HepG2 (cell line): ENCODE measurements at regions of chr9 and their contacts with region 1.

Region 1: GRCh38 chr9:124257844-124258606 is at the start of gene NEK6:
- DNase-seq: no peak
- ATAC-seq: no peak
- H3K4me3 ChIP-seq: peak within 1 kb of the TSS; percentile 77 to 99 (median 98)
- H3K27ac ChIP-seq: peak within 1 kb of the TSS; percentile 95
- H3K4me1 ChIP-seq: peaks cover 50% of the 10 kb centered on the region
- H3K27me3 ChIP-seq: peaks cover 0 to 12% of the 10 kb centered on the region in 2 experiments; a peak in 3 of 5 replicates
- CTCF ChIP-seq: no peak
- EP300 ChIP-seq: no peak
- POLR2A ChIP-seq: peak in 1 of 2 experiments; percentile 14; a peak in 1 of 4 replicates
- RAD21 ChIP-seq: no peak; the same call in 1 of the 2 replicates
- total RNA-seq, gene NEK6: 30.4 and 44.7 TPM in 2 replicates

Region 2: GRCh38 chr9:124079176-124079925 is 178.7 kb before region 1 on chr9:
- CTCF ChIA-PET with region 1: no interaction called
- POLR2A ChIA-PET with region 1: no interaction called
- in situ Hi-C with region 1: no loop called
- intact Hi-C with region 1: no loop called
- DNase-seq: peak; percentile 21
- ATAC-seq: peak; percentile 15; the same call in 2 of the 3 replicates
- H3K4me3 ChIP-seq: no peak overlapping the region
- H3K27ac ChIP-seq: no peak overlapping the region
- H3K4me1 ChIP-seq: peaks cover 27% of the 10 kb centered on the region
- H3K27me3 ChIP-seq: no peaks in the 10 kb centered on the region; a peak in 2 of 5 replicates
- CTCF ChIP-seq: no peak
- EP300 ChIP-seq: no peak
- POLR2A ChIP-seq: no peak
- RAD21 ChIP-seq: no peak

Region 3: GRCh38 chr9:124202447-124202971 is 55.5 kb before region 1 on chr9:
- CTCF ChIA-PET with region 1: no interaction called
- POLR2A ChIA-PET with region 1: no interaction called
- in situ Hi-C with region 1: no loop called
- intact Hi-C with region 1: no loop called
- DNase-seq: no peak
- ATAC-seq: peak; percentile 59; the same call in 2 of the 3 replicates
- H3K4me3 ChIP-seq: no peak overlapping the region
- H3K27ac ChIP-seq: no peak overlapping the region
- H3K4me1 ChIP-seq: peaks cover 10% of the 10 kb centered on the region; the same call in 1 of the 2 replicates
- H3K27me3 ChIP-seq: peaks cover 0 to 30% of the 10 kb centered on the region in 2 experiments; a peak in 3 of 5 replicates
- CTCF ChIP-seq: no peak
- EP300 ChIP-seq: no peak
- POLR2A ChIP-seq: no peak
- RAD21 ChIP-seq: no peak

Region 4: GRCh38 chr9:124222918-124223720 is 34.9 kb before region 1 on chr9:
- CTCF ChIA-PET with region 1: no interaction called
- POLR2A ChIA-PET with region 1: interaction called, 20 read pairs
- in situ Hi-C with region 1: no loop called
- intact Hi-C with region 1: loop called (anchors 5 kb)
- DNase-seq: peak; percentile 96
- ATAC-seq: peak; percentile 88
- H3K4me3 ChIP-seq: peak overlapping the region in 1 of 3 experiments; percentile 47; a peak in 2 of 6 replicates
- H3K27ac ChIP-seq: peak overlapping the region; percentile 60
- H3K4me1 ChIP-seq: peaks cover 65% of the 10 kb centered on the region
- H3K27me3 ChIP-seq: no peaks in the 10 kb centered on the region
- CTCF ChIP-seq: peak; percentile 25
- EP300 ChIP-seq: peak; percentile 89 to 93
- POLR2A ChIP-seq: no peak
- RAD21 ChIP-seq: peak; percentile 21; the same call in 1 of the 2 replicates

Region 5: GRCh38 chr9:124285903-124286291 is 27.9 kb after region 1 on chr9:
- CTCF ChIA-PET with region 1: no interaction called
- POLR2A ChIA-PET with region 1: interaction called, 10 read pairs
- in situ Hi-C with region 1: no loop called
- intact Hi-C with region 1: loop called (anchors 2 kb)
- DNase-seq: no peak
- ATAC-seq: no peak
- H3K4me3 ChIP-seq: no peak overlapping the region
- H3K27ac ChIP-seq: peak overlapping the region; percentile 82
- H3K4me1 ChIP-seq: peaks cover 94% of the 10 kb centered on the region
- H3K27me3 ChIP-seq: no peaks in the 10 kb centered on the region
- CTCF ChIP-seq: no peak
- EP300 ChIP-seq: no peak
- POLR2A ChIP-seq: no peak
- RAD21 ChIP-seq: no peak